Gastrocnemius medialis (tissue), 4 donors: ENCODE measurements at regions of chr21 and their contacts with region 1.

Region 1: GRCh38 chr21:39527664-39528381 is 76.1 kb downstream of the SH3BGR start:
- DNase-seq: no peak
- ATAC-seq: no peak
- H3K4me3 ChIP-seq: no peak overlapping the region
- H3K27ac ChIP-seq: no peak overlapping the region
- H3K4me1 ChIP-seq: peaks cover 13 to 32% of the 10 kb centered on the region in 2 donors
- H3K27me3 ChIP-seq: no peaks in the 10 kb centered on the region
- CTCF ChIP-seq: no peak
- POLR2A ChIP-seq: no peak

Region 2: DNA sequence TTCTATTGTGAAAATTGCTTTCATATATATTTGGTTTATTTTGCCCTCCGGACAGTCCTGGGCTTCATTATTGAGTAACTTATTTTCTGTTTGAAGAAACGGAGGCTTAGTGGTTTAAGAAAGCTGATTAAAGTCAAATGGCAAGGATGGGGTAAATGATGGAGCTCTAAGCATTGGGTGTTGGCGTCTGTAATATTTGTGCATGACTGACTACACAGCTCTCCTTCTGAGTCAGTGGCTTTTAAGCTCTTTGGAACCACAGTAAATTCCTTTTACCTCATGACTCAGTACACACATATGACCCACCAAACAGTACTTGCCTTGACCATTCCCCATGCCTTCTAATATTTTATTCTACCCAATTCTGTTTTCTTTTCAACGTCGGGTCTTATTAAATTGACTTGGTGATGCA is 106.0 kb after region 1 on chr21:
- in situ Hi-C with region 1: loop called in 1 of 4 experiments (anchors 25 kb)
- intact Hi-C with region 1: no loop called
- DNase-seq: no peak
- ATAC-seq: no peak
- H3K4me3 ChIP-seq: no peak overlapping the region
- H3K27ac ChIP-seq: no peak overlapping the region
- H3K4me1 ChIP-seq: no peaks in the 10 kb centered on the region
- H3K27me3 ChIP-seq: peaks cover 0 to 3% (median 0%) of the 10 kb centered on the region in 3 donors
- CTCF ChIP-seq: no peak
- POLR2A ChIP-seq: no peak

Region 3: GRCh38 chr21:39715804-39716397 is 188.1 kb after region 1 on chr21:
- in situ Hi-C with region 1: loop called in 1 of 4 experiments (anchors 5 kb)
- intact Hi-C with region 1: no loop called
- DNase-seq: peak in 1 of 2 donors; percentile 32
- ATAC-seq: peak; percentile 45 to 56
- H3K4me3 ChIP-seq: no peak overlapping the region
- H3K27ac ChIP-seq: no peak overlapping the region
- H3K4me1 ChIP-seq: peaks cover 0 to 4% of the 10 kb centered on the region in 2 donors
- H3K27me3 ChIP-seq: peaks cover 0 to 3% (median 3%) of the 10 kb centered on the region in 3 donors
- CTCF ChIP-seq: peak; percentile 26 to 72 (median 65)
- POLR2A ChIP-seq: no peak